Gastrocnemius medialis (tissue), 4 donors: ENCODE measurements at regions of chr14 and their contacts with region 1.

Region 1: DNA sequence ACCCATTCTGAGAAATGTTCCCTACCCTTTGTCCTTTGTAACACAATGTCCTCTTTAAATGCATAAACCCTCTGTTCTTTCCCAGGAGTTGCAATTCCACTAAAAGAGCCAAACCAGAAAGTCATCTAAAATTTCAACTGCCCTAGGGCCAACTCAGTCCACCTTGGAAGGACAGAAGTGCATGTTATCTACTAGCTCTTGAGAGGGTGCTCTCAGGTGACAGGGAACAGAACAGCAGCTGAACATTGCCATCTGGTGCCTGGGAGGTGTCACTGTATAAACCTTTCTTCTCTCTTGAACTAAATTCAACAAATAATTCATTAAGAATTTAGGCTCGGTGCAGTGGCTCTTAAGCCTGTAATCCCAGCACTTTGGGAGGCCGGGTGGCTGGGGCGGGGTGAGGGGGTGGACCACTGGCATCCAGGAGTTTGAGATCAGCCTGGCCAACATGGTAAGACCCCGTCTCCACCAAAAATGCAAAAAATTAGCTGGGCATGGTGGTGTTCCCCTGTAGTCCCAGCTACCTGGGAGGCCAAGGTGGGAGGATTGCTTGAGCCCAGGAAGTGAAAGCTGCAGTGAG is 10.3 kb upstream of the FERMT2 start:
- DNase-seq: peak; percentile 49 to 60
- ATAC-seq: peak; percentile 88 to 97
- H3K4me3 ChIP-seq: no peak overlapping the region
- H3K27ac ChIP-seq: peak overlapping the region; percentile 39 to 58 (median 50)
- H3K4me1 ChIP-seq: peaks cover 0 to 3% of the 10 kb centered on the region in 2 donors
- H3K27me3 ChIP-seq: no peaks in the 10 kb centered on the region
- CTCF ChIP-seq: peak; percentile 70 to 76 (median 74)
- POLR2A ChIP-seq: no peak

Region 2: DNA sequence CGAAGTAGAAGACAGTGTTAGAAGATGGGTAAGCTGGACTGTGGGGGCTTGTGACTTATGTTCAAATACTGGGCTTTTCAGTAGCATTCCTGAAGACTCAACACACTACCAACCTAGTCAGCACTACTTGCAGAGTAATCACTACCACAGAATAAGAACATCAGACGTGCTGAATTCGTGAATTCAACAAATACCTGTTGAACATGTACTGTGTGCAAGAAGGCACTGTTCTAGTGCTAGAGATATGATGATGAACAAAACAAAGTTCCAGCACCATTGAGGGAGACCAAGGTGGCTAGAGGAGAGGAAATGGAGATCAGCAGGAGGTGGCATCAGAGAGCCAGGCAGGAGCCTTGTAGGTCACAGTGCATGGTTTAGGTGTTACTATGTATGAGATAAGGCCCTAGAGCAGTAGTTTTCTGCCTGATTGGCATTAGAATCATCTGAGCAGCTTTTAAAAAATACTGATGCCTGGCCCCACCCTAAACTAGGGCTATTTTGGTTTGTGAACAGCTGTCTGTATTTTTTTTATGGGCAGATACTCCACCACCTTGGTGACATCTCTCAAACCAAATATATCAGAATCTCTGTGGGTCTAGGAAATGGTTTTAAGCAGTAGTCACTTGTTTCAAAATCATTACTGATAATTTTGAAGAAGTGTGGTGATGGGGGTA is 37.1 kb before region 1 on chr14:
- in situ Hi-C with region 1: no loop called
- intact Hi-C with region 1: loop called (anchors 1 kb)
- DNase-seq: no peak
- ATAC-seq: peak; percentile 67 to 83
- H3K4me3 ChIP-seq: no peak overlapping the region
- H3K27ac ChIP-seq: peak overlapping the region in 2 of 4 donors; percentile 5 to 40
- H3K4me1 ChIP-seq: peaks cover 68 to 91% of the 10 kb centered on the region in 2 donors
- H3K27me3 ChIP-seq: no peaks in the 10 kb centered on the region
- CTCF ChIP-seq: peak in 3 of 5 experiments; percentile 33 to 50 (median 33)
- POLR2A ChIP-seq: no peak

Region 3: DNA sequence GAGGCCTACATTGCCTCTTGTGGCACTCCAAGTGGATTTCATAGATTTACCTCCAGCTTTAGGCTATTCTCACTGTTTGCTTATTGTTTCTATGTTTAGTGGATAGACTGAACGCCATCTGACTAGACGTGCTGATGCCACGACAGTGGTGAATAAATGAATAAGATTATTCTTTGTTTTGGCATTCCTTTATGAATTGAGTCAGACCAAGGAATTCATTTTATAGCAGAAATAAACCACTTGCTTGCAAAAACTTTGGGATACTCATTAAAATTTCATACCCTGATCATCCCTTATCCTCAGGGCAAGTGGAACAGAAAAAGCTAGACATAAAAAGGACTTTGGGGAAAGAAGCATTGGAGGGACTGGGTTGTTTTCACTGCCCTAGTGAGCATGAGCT is 61.4 kb after region 1 on chr14:
- in situ Hi-C with region 1: no loop called
- intact Hi-C with region 1: no loop called
- DNase-seq: no peak
- ATAC-seq: no peak
- H3K4me3 ChIP-seq: no peak overlapping the region
- H3K27ac ChIP-seq: no peak overlapping the region
- H3K4me1 ChIP-seq: no peaks in the 10 kb centered on the region
- H3K27me3 ChIP-seq: no peaks in the 10 kb centered on the region
- CTCF ChIP-seq: no peak
- POLR2A ChIP-seq: no peak